Caco-2 (cell line): ENCODE measurements at regions of chr2 and their contacts with region 1.

Region 1: DNA sequence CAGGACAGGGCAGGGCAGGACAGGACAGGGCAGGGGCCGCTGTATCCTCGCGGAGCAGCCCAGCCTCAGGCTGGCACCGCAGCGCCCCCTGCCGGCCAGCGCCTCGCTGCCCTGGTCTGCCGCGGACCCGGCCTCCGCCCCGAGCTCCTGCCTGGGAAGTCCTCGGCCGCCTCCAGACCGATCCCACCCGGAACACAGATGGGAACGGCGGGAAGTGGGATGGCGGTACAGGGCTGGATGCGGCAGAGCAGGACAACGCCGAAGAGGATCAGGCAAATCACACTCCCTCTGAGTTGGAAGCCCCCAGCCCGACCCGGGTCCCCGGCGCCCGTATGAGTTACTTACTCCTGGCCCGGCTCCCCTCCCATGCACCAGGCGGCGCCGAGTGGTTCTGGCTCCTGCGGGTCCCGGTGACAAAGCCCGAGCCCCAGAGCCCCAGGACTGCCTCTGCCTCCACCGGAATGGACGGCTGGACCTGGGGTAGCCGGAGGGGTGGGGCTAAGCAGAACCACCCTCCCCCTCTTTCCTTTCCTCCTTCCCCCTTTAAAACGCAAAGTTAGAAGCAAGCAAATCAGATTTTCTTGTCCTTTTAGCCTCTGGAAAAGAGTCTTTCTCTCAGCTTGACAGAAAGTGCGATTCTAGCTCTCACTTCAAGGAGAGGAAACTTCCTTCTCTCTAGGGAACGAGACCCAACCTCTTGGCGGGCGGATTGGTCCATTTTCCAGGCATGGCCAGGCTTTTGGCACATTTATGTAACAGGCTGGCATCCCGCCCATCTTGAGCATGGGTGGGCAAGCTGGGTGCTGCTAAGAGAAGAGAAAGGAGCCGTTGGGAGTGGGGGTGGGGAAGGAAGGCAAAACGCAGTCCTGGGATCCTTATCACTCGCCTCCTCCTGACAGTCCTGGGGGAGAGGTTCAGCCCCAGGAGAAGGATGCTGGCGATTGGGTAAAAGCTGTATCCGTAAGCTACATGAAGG is at the start of gene TP53I3:
- DNase-seq: peak; percentile 94 to 99
- H3K4me3 ChIP-seq: peak within 1 kb of the TSS; percentile 54
- H3K4me3 Mint-ChIP-seq: peak within 1 kb of the TSS; percentile 82
- H3K27ac Mint-ChIP-seq: peak within 1 kb of the TSS; percentile 91
- H3K4me1 ChIP-seq: peaks cover 8% of the 10 kb centered on the region
- H3K4me1 Mint-ChIP-seq: peaks cover 13% of the 10 kb centered on the region
- H3K27me3 ChIP-seq: no peaks in the 10 kb centered on the region
- H3K27me3 Mint-ChIP-seq: no peaks in the 10 kb centered on the region
- CTCF ChIP-seq: peak; percentile 71 to 95
- total RNA-seq, gene TP53I3: 24.8 and 28.1 TPM in 2 replicates

Region 2: DNA sequence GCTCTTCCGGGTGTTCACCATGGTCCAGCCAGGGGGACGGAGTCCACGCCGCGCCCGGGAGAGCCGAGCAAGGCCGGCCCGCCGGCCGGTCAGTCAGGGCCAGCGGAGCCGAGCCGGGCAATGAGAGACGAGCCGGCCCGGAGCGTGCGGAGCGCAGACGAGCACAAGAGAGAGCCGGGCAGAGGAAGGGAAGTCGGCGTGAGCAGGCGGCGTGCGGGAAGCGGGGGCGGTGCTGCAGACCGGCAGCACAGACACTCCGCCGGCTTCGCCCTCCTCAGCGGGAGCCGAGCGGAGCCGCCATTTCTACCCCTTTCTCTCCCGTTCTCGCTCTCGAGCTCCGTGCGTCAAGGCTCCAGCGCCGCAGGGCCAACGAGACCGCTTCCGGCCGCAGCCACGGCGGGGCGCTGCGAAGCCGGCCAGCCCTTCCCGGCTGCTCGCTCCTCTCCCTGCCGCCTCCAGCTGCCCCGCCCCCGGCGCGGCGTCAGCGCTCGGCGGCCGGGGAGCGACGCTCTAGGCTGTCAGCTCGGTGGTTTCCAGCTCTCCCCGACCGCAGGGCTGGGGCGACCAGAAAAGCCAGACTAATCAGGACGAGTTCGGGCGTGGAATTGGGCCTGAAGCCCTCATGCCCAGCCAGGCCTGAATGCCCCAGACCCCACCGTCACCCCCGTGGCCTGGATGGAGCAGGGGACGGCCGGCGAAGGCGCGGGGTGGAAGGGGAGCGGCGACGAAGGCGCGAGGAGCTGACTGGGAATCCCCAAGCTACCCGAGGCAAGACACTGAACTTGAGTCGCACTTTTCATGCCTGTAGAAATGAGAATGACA is 157.7 kb before region 1 on chr2 and contains the start of gene ATAD2B:
- CTCF ChIA-PET with region 1: interaction called, 64 read pairs
- POLR2A ChIA-PET with region 1: interaction called, 39 read pairs
- intact Hi-C with region 1: loop called (anchors 1 kb)
- DNase-seq: peak; percentile 91 to 99
- H3K4me3 ChIP-seq: peak within 1 kb of the TSS; percentile 99
- H3K4me3 Mint-ChIP-seq: peak within 1 kb of the TSS; percentile 91
- H3K27ac Mint-ChIP-seq: peak within 1 kb of the TSS; percentile 94
- H3K4me1 ChIP-seq: 0 out of 2 replicates have a peak, but pooled peaks cover 3% of the 10 kb centered on the region
- H3K4me1 Mint-ChIP-seq: peaks cover 25% of the 10 kb centered on the region
- H3K27me3 ChIP-seq: no peaks in the 10 kb centered on the region
- H3K27me3 Mint-ChIP-seq: no peaks in the 10 kb centered on the region
- CTCF ChIP-seq: peak; percentile 74 to 92
- total RNA-seq, gene ATAD2B: 28.9 and 32.1 TPM in 2 replicates

Region 3: DNA sequence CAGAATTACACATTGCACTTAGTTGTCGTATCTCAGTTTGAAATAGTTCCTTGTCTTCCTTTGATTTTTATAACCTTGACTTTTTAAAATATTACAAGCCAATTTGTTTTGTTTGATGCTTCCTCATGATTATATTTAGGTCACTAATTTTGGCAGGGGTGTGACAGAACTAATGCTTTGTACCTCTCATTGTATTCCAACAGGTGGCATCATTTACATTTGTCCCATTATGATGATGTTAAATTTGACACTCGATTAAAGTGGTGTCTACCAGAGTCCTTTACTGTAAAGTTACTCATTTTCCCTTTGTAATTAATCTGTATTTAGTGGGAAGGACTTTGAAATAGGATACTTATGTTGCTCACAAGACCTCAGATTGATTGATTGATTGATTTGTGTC is 96.3 kb before region 1 on chr2:
- CTCF ChIA-PET with region 1: interaction called, 3 read pairs
- POLR2A ChIA-PET with region 1: no interaction called
- intact Hi-C with region 1: loop called (anchors 1 kb)
- DNase-seq: no peak
- H3K4me3 ChIP-seq: no peak overlapping the region
- H3K4me3 Mint-ChIP-seq: no peak overlapping the region
- H3K27ac Mint-ChIP-seq: no peak overlapping the region
- H3K4me1 ChIP-seq: no peaks in the 10 kb centered on the region
- H3K4me1 Mint-ChIP-seq: no peaks in the 10 kb centered on the region
- H3K27me3 ChIP-seq: no peaks in the 10 kb centered on the region
- H3K27me3 Mint-ChIP-seq: no peaks in the 10 kb centered on the region
- CTCF ChIP-seq: peak; percentile 21 to 36

Region 4: GRCh38 chr2:24046930-24047702 is 37.6 kb before region 1 on chr2 and contains the start of gene WDCP:
- CTCF ChIA-PET with region 1: interaction called, 22 read pairs
- POLR2A ChIA-PET with region 1: interaction called, 15 read pairs
- intact Hi-C with region 1: loop called (anchors 1 kb)
- DNase-seq: peak; percentile 96 to 98
- H3K4me3 ChIP-seq: peak within 1 kb of the TSS; percentile 65
- H3K4me3 Mint-ChIP-seq: peak within 1 kb of the TSS; percentile 86
- H3K27ac Mint-ChIP-seq: peak within 1 kb of the TSS; percentile 30
- H3K4me1 ChIP-seq: peaks cover 4% of the 10 kb centered on the region; the same call in 1 of the 2 replicates
- H3K4me1 Mint-ChIP-seq: peaks cover 7% of the 10 kb centered on the region
- H3K27me3 ChIP-seq: no peaks in the 10 kb centered on the region
- H3K27me3 Mint-ChIP-seq: no peaks in the 10 kb centered on the region
- CTCF ChIP-seq: no peak
- total RNA-seq, gene WDCP: 10.4 and 13.0 TPM in 2 replicates

Region 5: DNA sequence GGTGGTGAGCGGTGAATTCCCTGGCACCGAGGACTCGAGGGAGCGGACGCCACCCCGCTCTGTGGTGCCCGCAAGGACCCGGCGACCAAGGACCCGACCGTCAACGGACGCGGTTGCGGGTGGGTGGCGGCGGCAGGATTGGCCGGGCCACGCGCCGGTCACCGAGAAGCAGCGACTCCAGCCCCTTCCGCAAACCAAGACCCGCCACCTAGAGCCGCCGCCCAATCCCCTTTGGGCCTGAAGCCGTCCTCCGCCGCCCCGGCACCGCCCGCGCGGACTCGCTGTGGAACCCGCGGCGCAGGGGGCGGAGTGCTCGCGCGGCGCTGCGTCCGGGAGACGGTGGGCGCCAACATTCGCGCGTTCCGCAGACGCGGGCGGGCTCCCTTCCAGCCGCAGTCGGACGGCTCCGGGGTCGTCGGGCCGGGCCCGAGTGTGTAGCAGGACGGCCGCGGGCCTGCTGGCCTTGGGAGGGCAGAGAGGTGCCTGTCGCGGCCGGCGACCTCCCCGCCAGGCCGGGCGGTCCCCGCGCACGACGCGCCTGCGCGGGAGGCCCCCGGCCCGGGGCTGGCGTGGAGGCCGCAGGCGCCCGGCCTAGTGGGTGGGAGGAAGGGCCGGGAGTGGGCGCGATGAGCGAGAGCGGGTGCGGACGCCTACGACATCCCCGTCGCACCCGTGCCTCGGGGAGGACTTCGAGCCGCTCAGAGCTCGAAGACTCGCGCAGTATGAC is 38.7 kb after region 1 on chr2 and contains the starts of genes FAM228B and PFN4:
- CTCF ChIA-PET with region 1: interaction called, 13 read pairs
- POLR2A ChIA-PET with region 1: interaction called, 7 read pairs
- intact Hi-C with region 1: loop called (anchors 1 kb)
- DNase-seq: peak; percentile 89 to 92
- H3K4me3 ChIP-seq: peak within 1 kb of the TSS; percentile 97
- H3K4me3 Mint-ChIP-seq: peak within 1 kb of the TSS; percentile 82
- H3K27ac Mint-ChIP-seq: peak within 1 kb of the TSS; percentile 88
- H3K4me1 ChIP-seq: no peaks in the 10 kb centered on the region
- H3K4me1 Mint-ChIP-seq: peaks cover 18% of the 10 kb centered on the region
- H3K27me3 ChIP-seq: no peaks in the 10 kb centered on the region
- H3K27me3 Mint-ChIP-seq: no peaks in the 10 kb centered on the region
- CTCF ChIP-seq: no peak
- total RNA-seq, gene FAM228B: 6.7 and 7.9 TPM in 2 replicates
- total RNA-seq, gene PFN4: 1.3 and 1.4 TPM in 2 replicates

Region 6: DNA sequence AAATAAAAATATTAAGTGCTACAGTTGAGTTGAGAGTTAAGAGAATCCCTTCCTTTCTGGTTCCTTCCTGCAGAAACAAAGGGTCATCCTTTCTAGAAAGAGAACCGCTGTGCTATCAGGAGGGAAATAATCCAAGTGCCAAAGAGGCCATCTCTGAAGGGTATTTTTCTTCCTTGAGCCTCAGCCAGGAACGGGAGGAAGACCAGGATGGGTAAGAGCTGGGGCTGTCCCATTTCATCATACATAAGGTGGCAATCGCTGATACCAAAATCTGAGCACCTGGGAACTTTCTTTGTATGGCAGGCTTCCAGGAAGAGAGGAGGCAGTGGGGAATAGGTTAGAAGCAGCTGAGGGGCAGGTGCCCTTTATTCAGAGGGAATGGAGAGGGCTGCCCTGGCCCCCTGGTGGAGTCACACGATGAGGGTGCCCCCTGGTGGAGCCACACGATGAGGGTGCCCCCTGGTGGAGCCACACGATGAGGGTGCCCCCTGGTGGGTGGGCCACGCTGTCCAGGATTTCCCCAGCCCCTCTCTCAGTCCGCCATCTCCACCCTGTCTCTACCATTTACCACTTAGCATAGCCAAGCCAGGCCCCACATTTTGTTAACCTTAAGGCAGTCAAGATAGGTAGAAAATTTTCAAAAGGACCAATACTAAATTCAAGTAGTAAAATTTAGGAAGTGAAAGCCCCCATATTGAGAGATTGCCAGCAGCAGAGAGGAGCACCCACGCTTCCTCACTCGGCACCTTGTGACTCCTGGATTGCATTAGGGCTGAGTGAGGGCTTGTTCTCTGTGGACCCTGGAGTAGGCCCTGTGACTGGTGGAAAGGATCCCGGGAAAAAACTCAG is 79.7 kb after region 1 on chr2:
- CTCF ChIA-PET with region 1: interaction called, 15 read pairs
- POLR2A ChIA-PET with region 1: interaction called, 3 read pairs
- intact Hi-C with region 1: loop called (anchors 1 kb)
- DNase-seq: peak; percentile 66 to 84
- H3K4me3 ChIP-seq: no peak overlapping the region
- H3K4me3 Mint-ChIP-seq: no peak overlapping the region
- H3K27ac Mint-ChIP-seq: no peak overlapping the region
- H3K4me1 ChIP-seq: no peaks in the 10 kb centered on the region
- H3K4me1 Mint-ChIP-seq: no peaks in the 10 kb centered on the region
- H3K27me3 ChIP-seq: no peaks in the 10 kb centered on the region; the same call in 1 of the 2 replicates
- H3K27me3 Mint-ChIP-seq: peaks cover 2% of the 10 kb centered on the region
- CTCF ChIP-seq: peak; percentile 93 to 99

Region 7: DNA sequence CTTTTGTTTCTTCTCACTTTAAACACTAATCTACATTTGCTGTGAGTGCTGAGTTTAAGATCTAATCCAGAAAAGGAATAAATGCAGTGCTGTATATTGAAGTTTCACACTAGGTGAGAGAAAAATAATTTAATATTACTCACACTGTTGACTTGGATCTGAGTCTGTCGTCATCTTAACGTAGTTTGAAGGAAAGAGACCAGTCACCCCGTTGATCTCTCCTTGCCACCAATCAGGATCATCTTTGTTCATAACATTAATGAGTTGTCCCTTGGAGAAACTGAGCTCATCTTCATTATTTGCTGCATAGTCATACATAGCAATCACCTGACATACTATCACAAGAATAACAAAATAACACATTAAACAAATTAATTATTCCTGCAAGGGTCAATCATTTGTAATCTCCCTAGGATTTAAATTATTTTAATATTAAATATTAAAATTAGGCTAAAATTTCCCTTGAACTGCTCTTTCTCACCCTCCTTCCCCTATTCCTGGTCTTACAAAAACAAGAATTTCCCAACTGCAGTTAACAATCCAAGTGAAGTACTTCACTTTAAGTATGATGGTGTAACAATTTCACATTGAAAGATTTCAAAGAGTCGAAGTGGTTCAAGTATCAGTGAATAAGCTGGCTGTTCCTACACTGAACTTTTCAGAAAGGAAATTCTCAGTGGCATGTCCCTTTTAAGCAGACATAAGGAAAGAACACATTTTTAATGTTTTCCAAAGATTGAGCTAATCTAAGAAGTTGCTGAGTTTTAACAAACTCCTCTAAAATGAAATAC is 161.5 kb after region 1 on chr2:
- CTCF ChIA-PET with region 1: no interaction called
- POLR2A ChIA-PET with region 1: no interaction called
- intact Hi-C with region 1: no loop called
- DNase-seq: no peak
- H3K4me3 ChIP-seq: no peak overlapping the region
- H3K4me3 Mint-ChIP-seq: no peak overlapping the region
- H3K27ac Mint-ChIP-seq: no peak overlapping the region
- H3K4me1 ChIP-seq: peaks cover 10% of the 10 kb centered on the region
- H3K4me1 Mint-ChIP-seq: no peaks in the 10 kb centered on the region
- H3K27me3 ChIP-seq: no peaks in the 10 kb centered on the region
- H3K27me3 Mint-ChIP-seq: no peaks in the 10 kb centered on the region
- CTCF ChIP-seq: no peak